ENCODE measurements at regions of chr4 and their contacts with region 1.

Region 1: DNA sequence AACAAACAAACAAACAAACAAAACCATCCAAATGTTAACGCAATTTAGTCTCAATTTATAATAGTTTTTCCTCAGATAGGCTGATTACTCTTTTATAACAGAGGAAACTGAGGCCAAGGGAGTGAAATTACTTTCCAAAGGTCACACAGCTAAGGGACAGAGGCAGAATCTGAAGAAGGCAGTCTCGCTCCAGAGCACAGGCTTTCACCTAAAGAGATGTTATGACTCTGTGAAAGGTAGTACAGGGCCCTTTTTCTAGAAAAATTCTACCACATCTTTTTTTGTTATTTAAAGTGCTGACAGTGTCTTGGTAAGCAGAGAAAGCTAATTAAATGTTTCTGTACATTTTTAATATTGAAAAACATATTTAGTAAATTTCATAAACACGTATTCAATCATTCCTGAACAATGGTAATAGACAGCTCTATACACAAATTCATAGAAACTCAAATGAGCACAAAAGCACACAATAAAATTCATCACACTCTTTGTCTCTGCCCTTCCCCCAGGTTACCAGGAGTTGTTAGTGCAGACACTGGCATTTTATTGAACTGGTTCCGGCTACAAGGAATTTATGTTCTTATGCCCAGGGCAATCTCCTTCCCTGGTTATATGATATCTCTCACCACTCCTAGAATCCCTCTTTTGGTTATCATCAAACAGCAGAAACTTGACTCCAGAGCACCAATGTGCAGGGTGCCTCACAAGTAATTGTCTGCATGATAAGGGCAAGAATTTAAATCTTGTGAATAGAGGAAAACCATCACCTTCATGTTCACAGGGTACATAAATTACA is 7.7 kb upstream of the APBB2 start:
- DNase-seq: no peak
- ATAC-seq: no peak
- H3K4me3 ChIP-seq: no peak overlapping the region
- H3K4me3 Mint-ChIP-seq: no peak overlapping the region
- H3K27ac ChIP-seq: no peak overlapping the region
- H3K27ac Mint-ChIP-seq: no peak overlapping the region
- H3K4me1 ChIP-seq: no peaks in the 10 kb centered on the region
- H3K4me1 Mint-ChIP-seq: peaks cover 0 to under 1% (median 0%) of the 10 kb centered on the region in 3 donors
- H3K27me3 ChIP-seq: peaks cover 3 to 9% of the 10 kb centered on the region in 2 experiments
- H3K27me3 Mint-ChIP-seq: peaks cover 30 to 41% of the 10 kb centered on the region in 2 donors

Region 2: GRCh38 chr4:40933272-40934053 is 288.6 kb before region 1 on chr4:
- CTCF ChIA-PET with region 1: interaction called in 1 of 2 experiments, 10 read pairs
- POLR2A ChIA-PET with region 1: no interaction called
- DNase-seq: no peak
- ATAC-seq: no peak
- H3K4me3 ChIP-seq: no peak overlapping the region
- H3K4me3 Mint-ChIP-seq: no peak overlapping the region
- H3K27ac ChIP-seq: no peak overlapping the region
- H3K27ac Mint-ChIP-seq: no peak overlapping the region
- H3K4me1 ChIP-seq: no peaks in the 10 kb centered on the region
- H3K4me1 Mint-ChIP-seq: no peaks in the 10 kb centered on the region
- H3K27me3 ChIP-seq: peaks cover 0 to 15% of the 10 kb centered on the region in 2 experiments
- H3K27me3 Mint-ChIP-seq: peaks cover 3 to 7% of the 10 kb centered on the region in 2 donors

Region 3: DNA sequence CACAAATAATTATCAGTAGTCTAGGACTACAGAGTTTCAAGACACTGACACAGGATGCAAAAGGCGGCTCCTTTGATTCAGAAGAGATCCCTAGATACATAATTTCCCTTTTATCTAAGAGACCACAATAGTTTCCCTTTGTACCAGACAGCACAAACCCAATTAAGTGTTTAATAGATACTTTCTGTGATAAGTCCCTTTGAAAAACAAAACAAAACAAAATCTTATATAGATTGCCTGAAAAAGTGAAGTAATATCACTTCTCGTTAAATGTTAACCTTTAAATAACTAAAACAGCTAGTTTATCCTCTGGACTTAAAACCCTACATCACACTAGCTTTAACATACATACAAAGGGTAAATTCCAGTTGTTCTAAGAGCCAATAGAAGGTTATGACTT is 57.6 kb before region 1 on chr4:
- CTCF ChIA-PET with region 1: no interaction called
- POLR2A ChIA-PET with region 1: no interaction called
- DNase-seq: no peak
- ATAC-seq: no peak
- H3K4me3 ChIP-seq: no peak overlapping the region
- H3K4me3 Mint-ChIP-seq: no peak overlapping the region
- H3K27ac ChIP-seq: no peak overlapping the region
- H3K27ac Mint-ChIP-seq: no peak overlapping the region
- H3K4me1 ChIP-seq: no peaks in the 10 kb centered on the region
- H3K4me1 Mint-ChIP-seq: no peaks in the 10 kb centered on the region
- H3K27me3 ChIP-seq: peaks cover 0 to 3% of the 10 kb centered on the region in 2 experiments
- H3K27me3 Mint-ChIP-seq: peaks cover 5% of the 10 kb centered on the region in 2 donors